Right cardiac atrium (tissue), 5 donors: ENCODE measurements at regions of chr12 and their contacts with region 1.

Region 1: GRCh38 chr12:49232940-49233841 is 31.7 kb upstream of the TUBA1C start:
- DNase-seq: peak; percentile 65 to 89 (median 87)
- ATAC-seq: peak; percentile 70 to 80
- H3K4me3 ChIP-seq: peak overlapping the region; percentile 21
- H3K27ac ChIP-seq: peak overlapping the region; percentile 86
- H3K4me1 ChIP-seq: peaks cover 6% of the 10 kb centered on the region
- H3K27me3 ChIP-seq: no peaks in the 10 kb centered on the region

Region 2: GRCh38 chr12:49069507-49070346 is 163.5 kb before region 1 on chr12 and contains the start of gene RHEBL1:
- intact Hi-C with region 1: loop called in 1 of 4 experiments (anchors 10 kb)
- DNase-seq: peak; percentile 99 to 100 (median 99)
- ATAC-seq: peak; percentile 100
- H3K4me3 ChIP-seq: peak within 1 kb of the TSS; percentile 61
- H3K27ac ChIP-seq: no peak within 1 kb of the TSS
- H3K4me1 ChIP-seq: peaks cover 5% of the 10 kb centered on the region
- H3K27me3 ChIP-seq: no peaks in the 10 kb centered on the region
- total RNA-seq, gene RHEBL1: 0.21 to 0.31 TPM in 2 of 4 donors, not detected in the others

Region 3: DNA sequence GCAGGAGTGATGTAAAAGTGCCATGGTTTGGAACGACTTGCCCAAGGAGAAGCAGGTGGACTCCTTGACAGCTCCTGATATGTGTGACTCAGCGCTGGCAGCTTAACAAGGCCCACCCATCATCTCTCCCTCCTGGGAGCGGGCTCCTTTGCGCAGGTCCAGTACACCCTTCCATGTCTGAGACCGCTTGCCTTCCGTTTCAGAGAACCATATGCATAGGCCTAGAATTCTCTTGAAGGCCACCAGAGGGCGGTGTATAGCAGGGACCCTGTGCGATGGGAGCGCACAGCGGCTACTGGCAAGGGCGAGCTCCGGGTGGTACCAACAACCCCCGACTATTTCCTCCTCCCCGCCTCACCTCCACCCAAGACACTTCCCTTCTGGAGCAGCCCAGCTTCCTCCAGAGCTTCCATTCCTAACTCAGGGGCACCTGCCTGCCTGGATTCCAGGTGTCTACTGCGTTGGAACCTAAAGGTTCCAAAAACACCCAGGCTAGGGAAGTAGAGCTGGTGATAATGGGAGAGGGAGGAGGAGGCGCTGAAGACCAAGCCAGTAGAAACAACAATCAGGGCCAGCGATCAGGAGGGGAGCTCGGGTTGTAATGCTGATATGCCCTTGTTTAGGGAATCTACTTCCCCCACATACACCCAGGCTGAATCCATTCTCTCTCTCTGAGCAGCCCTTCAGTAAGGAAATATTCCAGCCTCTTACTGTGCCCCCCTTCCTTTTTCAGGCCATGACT is 144.8 kb before region 1 on chr12:
- intact Hi-C with region 1: loop called in 2 of 4 experiments (anchors 5 to 10 kb)
- DNase-seq: peak; percentile 77 to 80 (median 77)
- ATAC-seq: peak; percentile 90
- H3K4me3 ChIP-seq: no peak overlapping the region
- H3K27ac ChIP-seq: no peak overlapping the region
- H3K4me1 ChIP-seq: peaks cover 11% of the 10 kb centered on the region
- H3K27me3 ChIP-seq: no peaks in the 10 kb centered on the region

Region 4: GRCh38 chr12:49110464-49111155 is 122.6 kb before region 1 on chr12 and contains the start of gene LMBR1L:
- intact Hi-C with region 1: loop called in 1 of 4 experiments (anchors 10 kb)
- DNase-seq: peak; percentile 97 to 98 (median 97)
- ATAC-seq: peak; percentile 98
- H3K4me3 ChIP-seq: peak within 1 kb of the TSS; percentile 87
- H3K27ac ChIP-seq: peak within 1 kb of the TSS; percentile 93
- H3K4me1 ChIP-seq: peaks cover 3% of the 10 kb centered on the region
- H3K27me3 ChIP-seq: no peaks in the 10 kb centered on the region
- total RNA-seq, gene LMBR1L: 26.7 to 45.3 (median 34.6) TPM

Region 5: GRCh38 chr12:49130151-49131050 is 102.8 kb before region 1 on chr12:
- intact Hi-C with region 1: loop called in 2 of 4 experiments (anchors 2 kb)
- DNase-seq: peak; percentile 96 to 98 (median 97)
- ATAC-seq: peak; percentile 89 to 90
- H3K4me3 ChIP-seq: peak overlapping the region; percentile 81
- H3K27ac ChIP-seq: peak overlapping the region; percentile 99
- H3K4me1 ChIP-seq: peaks cover 5% of the 10 kb centered on the region
- H3K27me3 ChIP-seq: no peaks in the 10 kb centered on the region

Region 6: DNA sequence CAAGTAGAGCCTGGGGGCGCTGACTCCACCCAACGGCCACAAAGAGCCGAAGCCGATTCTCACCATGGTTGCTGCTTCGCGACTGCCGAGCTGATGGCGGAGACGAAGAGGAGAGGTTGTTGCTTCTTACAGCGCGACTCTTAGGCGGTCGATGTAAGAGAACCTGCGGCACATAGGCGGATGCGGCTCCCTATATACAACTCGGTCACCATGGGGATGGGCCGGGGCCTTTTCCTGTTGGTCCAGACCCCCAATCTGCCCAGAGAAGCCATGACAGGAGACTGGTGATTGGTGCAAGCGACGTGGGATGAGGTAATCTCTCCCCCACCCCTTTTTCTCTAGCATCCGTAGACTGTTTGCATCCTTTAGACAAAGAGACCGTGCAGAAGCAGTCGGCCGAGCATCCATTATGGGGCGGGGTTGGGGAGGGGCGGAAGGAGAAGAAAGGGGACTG is 44.2 kb before region 1 on chr12 and contains the start of gene TUBA1A:
- intact Hi-C with region 1: loop called in 3 of 4 experiments (anchors 5 kb)
- DNase-seq: peak; percentile 93 to 97 (median 95)
- ATAC-seq: peak; percentile 94 to 97
- H3K4me3 ChIP-seq: peak within 1 kb of the TSS; percentile 68
- H3K27ac ChIP-seq: peak within 1 kb of the TSS; percentile 73
- H3K4me1 ChIP-seq: no peaks in the 10 kb centered on the region
- H3K27me3 ChIP-seq: no peaks in the 10 kb centered on the region
- total RNA-seq, gene TUBA1A: 75.6 to 136 (median 112) TPM

Region 7: DNA sequence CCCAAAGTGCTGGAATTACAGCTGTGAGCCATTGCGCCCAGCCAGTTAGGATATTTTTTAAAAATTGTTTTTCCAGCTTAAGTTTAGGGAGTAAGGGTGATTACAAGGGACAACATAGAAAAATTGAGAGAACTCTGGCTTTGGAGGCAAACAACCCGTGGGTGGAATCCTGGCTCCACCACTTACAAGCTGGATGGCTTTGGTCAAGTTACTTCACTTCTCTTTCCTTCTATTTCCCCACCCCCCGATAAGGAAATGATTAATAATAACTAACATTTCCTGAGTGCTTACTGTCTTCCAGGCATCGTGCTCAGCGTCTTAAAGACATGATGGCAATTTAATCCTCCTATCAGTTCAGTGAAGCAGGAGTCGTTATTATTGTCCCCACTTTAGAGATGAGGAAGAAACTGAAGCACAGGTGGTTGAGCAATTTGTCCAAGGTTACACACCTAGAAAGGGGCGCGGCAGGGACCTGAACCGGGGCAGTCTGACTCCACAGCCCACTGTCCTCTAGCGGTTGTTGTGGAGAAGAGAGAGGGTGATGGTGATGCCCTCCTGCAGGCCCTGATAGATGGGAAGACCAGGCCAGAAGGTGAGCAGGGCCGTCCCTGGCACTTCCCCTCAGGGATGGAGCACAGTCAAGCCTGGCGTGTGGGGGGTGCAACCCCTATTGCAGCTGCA is 687.2 kb after region 1 on chr12:
- intact Hi-C with region 1: no loop called
- DNase-seq: peak in 2 of 3 donors; percentile 62 to 77
- ATAC-seq: peak; percentile 19 to 42
- H3K4me3 ChIP-seq: no peak overlapping the region
- H3K27ac ChIP-seq: peak overlapping the region; percentile 0
- H3K4me1 ChIP-seq: peaks cover 2% of the 10 kb centered on the region
- H3K27me3 ChIP-seq: no peaks in the 10 kb centered on the region